Activated CD4-positive, alpha-beta T cell treated with anti-CD3 and anti-CD28 coated beads for 36 hours (primary cell): ENCODE measurements at regions of chr20 and their contacts with region 1.

Region 1: GRCh38 chr20:54108817-54109216 is 38.4 kb upstream of the BCAS1 start:
- DNase-seq: no peak
- ATAC-seq: no peak
- H3K4me3 Mint-ChIP-seq: no peak overlapping the region
- H3K27ac Mint-ChIP-seq: no peak overlapping the region
- H3K4me1 Mint-ChIP-seq: peaks cover 3% of the 10 kb centered on the region
- H3K27me3 Mint-ChIP-seq: peaks cover 10% of the 10 kb centered on the region

Region 2: DNA sequence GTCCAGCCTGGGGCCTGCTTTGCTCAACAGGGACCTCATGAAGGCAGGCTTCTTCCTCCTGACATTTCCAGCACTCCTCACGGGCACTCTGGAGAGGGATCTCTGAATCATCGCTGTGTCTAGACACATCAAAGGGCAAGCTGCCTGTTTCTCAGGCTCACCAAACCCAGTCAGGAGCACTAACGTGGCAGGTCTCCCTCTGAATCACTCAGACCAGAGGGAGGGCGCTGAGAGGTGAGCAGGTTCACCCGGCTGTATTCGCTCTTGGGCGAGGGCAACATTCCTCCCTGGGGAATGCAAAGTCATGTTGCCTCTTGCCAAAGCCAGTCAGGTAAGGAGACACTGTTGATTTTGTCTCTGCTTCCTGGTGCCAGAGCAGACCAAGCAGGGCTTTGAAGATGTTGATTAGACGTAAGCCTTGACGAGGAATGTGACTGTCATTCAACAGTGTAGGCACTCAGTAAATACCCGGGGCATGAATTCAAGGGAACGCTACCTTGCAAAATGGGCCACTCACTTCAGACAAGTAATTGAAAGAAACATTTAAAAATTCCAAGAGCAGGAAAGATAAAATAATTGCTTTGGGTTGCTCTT is 14.9 kb after region 1 on chr20:
- CTCF ChIA-PET with region 1: interaction called, 4 read pairs
- POLR2A ChIA-PET with region 1: no interaction called
- intact Hi-C with region 1: loop called in 1 of 2 experiments (anchors 1 kb)
- DNase-seq: no peak
- ATAC-seq: no peak
- H3K4me3 Mint-ChIP-seq: no peak overlapping the region
- H3K27ac Mint-ChIP-seq: no peak overlapping the region
- H3K4me1 Mint-ChIP-seq: no peaks in the 10 kb centered on the region
- H3K27me3 Mint-ChIP-seq: no peaks in the 10 kb centered on the region

Region 3: DNA sequence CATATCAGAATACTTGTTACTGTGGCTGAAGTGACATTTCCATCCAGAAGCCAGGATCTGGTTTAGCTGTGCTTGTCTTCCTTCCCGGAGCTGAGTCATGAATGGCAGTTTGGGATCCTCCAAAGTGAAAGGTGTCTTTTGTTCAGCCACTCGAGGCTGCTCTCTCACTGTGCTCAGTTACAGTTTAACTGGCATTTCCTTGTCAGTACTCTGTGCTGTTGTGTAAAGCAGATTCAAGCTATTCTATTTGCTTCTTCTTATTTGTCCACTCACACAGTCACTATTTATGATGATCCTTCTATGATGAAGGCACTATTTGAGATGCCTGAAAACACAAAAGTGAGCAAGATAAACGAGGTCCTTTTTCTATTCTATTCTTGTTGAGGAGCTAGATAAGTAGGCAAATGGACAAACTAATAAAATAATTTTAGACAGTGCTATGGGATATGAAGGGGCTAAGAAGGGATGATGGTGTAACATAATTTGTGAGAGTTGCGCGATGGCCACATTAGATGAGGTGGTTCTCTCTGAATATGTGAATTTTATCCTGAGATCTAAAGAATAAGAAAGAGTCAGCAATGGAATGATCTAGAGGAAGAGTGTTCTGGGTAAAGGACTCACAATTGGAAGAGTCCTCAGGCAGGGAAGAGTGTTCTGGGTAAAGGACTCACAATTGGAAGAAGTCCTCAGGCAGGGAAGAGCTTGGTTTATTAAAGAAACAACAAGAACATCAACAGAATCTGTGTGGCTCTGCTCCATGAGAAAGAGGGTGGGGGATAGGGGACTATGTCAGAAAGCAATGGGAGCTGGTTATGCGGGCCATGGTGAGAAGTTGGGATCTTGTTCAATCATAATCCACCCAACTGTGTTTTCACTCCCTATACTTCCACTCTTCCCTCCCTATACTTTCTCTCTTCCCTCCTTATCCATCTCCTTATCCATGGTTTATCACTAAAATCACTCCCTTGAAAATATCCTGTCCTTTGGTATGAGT is 24.9 kb after region 1 on chr20:
- CTCF ChIA-PET with region 1: no interaction called
- POLR2A ChIA-PET with region 1: no interaction called
- intact Hi-C with region 1: no loop called
- DNase-seq: no peak
- ATAC-seq: no peak
- H3K4me3 Mint-ChIP-seq: no peak overlapping the region
- H3K27ac Mint-ChIP-seq: no peak overlapping the region
- H3K4me1 Mint-ChIP-seq: no peaks in the 10 kb centered on the region
- H3K27me3 Mint-ChIP-seq: peaks cover 4% of the 10 kb centered on the region

Region 4: DNA sequence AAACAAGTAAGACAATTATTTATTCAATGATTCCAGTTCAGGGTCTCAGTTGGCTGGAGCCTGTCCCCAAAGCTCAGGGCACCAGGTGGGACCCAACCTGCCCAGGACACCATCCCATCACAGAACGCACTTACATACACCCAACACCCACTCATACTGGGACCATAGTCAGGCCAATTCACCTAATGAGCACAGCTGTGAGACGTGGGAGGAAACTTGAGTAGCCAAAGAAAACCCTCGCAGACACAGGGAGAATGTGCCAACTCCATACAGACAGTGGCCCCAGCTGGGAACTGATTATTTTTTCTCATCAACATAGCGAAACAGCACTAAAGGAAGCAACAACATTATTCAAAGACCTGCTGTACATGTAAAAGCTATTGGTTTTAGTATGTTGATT is 308.0 kb after region 1 on chr20:
- CTCF ChIA-PET with region 1: no interaction called
- POLR2A ChIA-PET with region 1: no interaction called
- intact Hi-C with region 1: no loop called
- DNase-seq: no peak
- ATAC-seq: no peak
- H3K4me3 Mint-ChIP-seq: no peak overlapping the region
- H3K27ac Mint-ChIP-seq: no peak overlapping the region
- H3K4me1 Mint-ChIP-seq: no peaks in the 10 kb centered on the region
- H3K27me3 Mint-ChIP-seq: peaks cover 18% of the 10 kb centered on the region